ENCODE measurements at regions of chr11 and their contacts with region 1.

Region 1: DNA sequence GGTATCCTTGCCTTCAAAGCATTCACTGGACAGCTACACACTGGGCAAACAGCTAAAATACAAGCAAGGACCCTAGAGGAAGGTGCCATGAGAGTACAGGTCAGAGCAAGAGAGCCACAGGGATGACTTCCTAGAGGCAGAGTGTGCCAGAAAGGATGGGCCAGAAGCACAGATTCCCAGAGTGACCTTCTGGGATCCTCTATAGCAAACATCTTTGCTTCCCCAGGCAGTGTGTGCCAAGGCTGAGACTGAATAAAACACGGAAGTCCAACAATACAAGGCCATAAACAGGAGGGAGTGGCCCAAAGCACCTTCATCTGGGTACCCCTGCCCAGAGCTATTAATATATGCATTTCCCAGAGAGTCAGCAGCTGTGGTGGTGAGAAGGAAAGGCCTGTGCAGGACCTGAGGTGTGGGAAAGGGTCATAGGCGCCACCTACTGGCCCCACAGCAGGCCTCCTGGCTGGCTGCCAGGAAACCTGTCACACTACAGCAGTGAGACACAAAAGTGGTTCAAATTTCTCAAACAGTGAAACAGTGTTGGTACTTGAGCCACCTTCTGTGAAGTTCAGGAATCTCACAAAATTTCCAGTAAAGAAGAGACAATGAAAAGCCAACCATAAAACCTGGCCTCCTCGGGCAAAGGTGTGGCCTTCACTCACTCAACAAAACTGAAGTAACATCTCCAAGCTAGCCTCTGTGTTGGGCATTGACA is 20.3 kb downstream of the CLPB start:
- DNase-seq: peak; percentile 89
- H3K4me3 Mint-ChIP-seq: no peak overlapping the region
- H3K27ac Mint-ChIP-seq: no peak overlapping the region
- H3K4me1 Mint-ChIP-seq: peaks cover 18% of the 10 kb centered on the region
- H3K27me3 Mint-ChIP-seq: no peaks in the 10 kb centered on the region

Region 2: GRCh38 chr11:72293910-72294615 is 120.0 kb before region 1 on chr11:
- CTCF ChIA-PET with region 1: interaction called, 47 read pairs
- POLR2A ChIA-PET with region 1: no interaction called
- intact Hi-C with region 1: loop called (anchors 1 kb)
- DNase-seq: no peak
- H3K4me3 Mint-ChIP-seq: no peak overlapping the region
- H3K27ac Mint-ChIP-seq: no peak overlapping the region
- H3K4me1 Mint-ChIP-seq: no peaks in the 10 kb centered on the region
- H3K27me3 Mint-ChIP-seq: no peaks in the 10 kb centered on the region

Region 3: DNA sequence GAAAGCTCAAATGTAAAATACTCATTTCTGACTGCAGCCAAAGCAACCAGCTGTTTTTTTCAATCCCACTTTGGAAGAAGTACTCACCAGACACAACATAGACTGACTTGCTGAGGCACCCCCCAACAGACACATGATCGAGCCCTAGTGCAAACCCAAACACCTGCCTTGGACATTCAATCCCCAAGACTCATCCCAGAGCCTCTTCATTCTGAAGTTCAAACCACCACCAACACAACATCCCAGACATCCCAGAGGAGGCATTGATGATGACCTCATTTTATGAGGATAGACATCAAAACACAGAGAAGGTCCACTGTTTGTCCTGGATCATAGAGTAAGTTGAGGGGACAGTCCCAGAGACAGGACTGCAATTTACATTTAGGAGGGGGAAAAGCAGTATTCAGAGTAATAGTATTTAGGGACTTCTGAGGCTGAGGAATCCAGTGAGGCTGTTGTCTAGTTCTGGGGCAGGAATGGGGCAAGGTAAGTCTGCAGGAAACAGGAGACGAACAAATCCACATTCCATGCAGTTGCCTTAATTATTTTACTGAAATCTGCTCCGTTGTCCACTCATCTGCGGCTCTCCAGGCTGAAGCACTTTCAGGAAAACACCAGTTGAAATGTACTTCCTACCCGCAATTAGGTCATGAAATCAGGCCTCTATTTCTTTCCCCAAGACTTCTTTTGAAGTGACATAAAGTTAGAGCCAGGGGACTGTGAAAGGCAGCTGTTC is 34.5 kb before region 1 on chr11:
- CTCF ChIA-PET with region 1: no interaction called
- POLR2A ChIA-PET with region 1: no interaction called
- intact Hi-C with region 1: no loop called
- DNase-seq: no peak
- H3K4me3 Mint-ChIP-seq: no peak overlapping the region
- H3K27ac Mint-ChIP-seq: no peak overlapping the region
- H3K4me1 Mint-ChIP-seq: no peaks in the 10 kb centered on the region
- H3K27me3 Mint-ChIP-seq: no peaks in the 10 kb centered on the region

Region 4: DNA sequence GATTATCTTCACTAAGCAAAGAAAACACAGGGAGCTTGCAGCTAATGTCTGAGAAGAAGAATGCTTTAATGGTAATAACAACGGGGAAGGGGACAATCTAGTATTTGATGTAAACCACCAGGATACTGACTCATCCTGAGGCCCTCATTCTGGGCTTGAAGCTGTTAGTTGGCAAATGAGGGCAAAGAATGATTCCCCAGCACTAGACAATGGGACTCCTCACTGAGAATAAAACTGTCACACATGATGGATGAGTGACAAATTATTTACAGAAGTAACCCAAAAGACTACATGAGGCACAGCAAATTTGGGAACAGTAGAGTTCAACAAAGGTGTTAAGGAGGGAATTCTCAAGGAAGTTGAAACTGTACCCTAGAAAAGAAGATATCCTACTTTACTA is 1107.5 kb after region 1 on chr11:
- CTCF ChIA-PET with region 1: no interaction called
- POLR2A ChIA-PET with region 1: no interaction called
- intact Hi-C with region 1: no loop called
- DNase-seq: peak; percentile 22
- H3K4me3 Mint-ChIP-seq: no peak overlapping the region
- H3K27ac Mint-ChIP-seq: peak overlapping the region; percentile 6
- H3K4me1 Mint-ChIP-seq: peaks cover 19% of the 10 kb centered on the region
- H3K27me3 Mint-ChIP-seq: no peaks in the 10 kb centered on the region

Measured in activated CD4-positive, alpha-beta memory T cell treated with anti-CD3 and anti-CD28 coated beads for 36 hours (primary cell).